AG04449 (cell line): ENCODE measurements at regions of chr5 and their contacts with region 1.

Region 1: GRCh38 chr5:58460732-58461286 is 923 bp upstream of the PLK2 start:
- DNase-seq: no peak
- H3K4me3 ChIP-seq: peak overlapping the region; percentile 88
- CTCF ChIP-seq: peak; percentile 84

Region 2: GRCh38 chr5:57442080-57442839 is 1018.5 kb before region 1 on chr5:
- CTCF ChIA-PET with region 1: interaction called, 5 read pairs
- POLR2A ChIA-PET with region 1: interaction called, 15 read pairs
- DNase-seq: peak; percentile 87
- H3K4me3 ChIP-seq: no peak overlapping the region
- CTCF ChIP-seq: no peak

Region 3: DNA sequence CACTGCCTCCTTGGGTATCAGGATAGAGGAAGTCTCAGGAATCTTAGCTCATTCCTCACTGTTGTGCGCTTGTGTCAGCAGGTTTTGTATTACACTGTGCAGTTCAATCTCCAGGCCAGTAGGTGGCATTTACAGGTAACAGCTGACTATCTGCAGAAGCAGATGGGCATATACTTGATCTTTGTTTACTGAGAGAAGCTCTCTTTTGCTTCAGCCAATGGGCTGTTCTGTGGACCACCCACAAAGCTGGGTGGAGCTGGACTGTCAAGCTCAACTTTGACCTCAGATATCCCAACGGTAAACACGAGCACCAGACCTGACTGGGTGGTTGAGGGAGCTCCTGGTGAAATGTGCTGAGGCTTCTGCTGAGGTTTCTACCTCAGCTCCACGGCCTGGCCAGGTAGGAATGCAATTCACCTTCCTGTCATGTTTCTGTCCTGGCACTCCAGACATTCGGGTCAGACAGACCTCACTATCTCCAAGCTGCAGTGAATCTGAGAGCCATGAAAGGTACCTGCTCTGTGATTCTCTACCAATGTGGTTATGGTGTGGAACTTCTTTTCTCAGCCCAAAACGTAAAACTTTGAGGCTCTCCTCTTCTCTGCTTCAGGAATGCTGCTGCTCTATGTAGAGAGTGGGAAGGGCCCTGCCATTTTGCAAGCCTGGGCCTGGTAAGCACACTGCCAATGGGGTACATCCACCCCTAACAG is 810.3 kb before region 1 on chr5:
- CTCF ChIA-PET with region 1: interaction called, 23 read pairs
- POLR2A ChIA-PET with region 1: no interaction called
- DNase-seq: no peak
- H3K4me3 ChIP-seq: no peak overlapping the region
- CTCF ChIP-seq: peak; percentile 63

Region 4: DNA sequence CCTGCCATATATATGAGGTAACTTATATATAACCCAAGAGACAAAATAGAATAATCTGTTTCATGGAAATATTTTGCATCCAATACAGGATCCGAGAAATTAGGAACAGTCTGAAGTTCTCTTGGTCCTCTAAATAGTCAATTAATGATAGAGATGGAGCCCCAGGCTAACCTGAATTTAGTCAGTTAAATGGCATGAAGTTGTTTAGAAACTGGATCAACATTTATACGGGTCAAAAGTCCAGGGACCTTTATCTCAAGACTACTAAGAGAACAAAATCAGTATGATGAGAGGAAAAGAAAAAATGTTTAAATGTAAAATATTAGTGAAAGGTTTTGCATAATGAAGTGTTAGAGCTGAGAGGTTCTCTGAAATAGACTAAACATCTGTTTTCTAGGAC is 674.9 kb before region 1 on chr5:
- CTCF ChIA-PET with region 1: interaction called, 283 read pairs
- POLR2A ChIA-PET with region 1: interaction called, 4 read pairs
- DNase-seq: no peak
- H3K4me3 ChIP-seq: no peak overlapping the region
- CTCF ChIP-seq: no peak

Region 5: DNA sequence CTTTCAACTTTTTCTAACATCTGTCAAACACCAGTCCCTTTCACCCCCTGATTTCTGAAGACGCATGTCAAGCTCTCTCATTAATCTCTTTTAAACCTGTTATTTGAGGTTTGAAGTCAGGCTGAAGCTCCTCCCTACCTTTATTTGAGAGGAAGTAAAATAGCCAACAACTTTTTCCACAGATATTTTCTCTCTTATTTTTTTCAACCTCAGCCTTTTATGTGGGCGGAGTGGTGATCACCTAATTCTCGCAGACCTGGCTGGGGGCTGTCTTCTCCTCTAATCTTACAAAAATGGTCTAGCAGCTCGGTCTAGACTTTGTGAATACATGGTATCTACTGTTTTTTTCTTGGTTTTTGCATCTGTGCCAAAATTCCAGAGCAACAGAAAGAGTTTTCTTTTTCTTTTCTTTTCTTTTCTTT is 582.5 kb before region 1 on chr5:
- CTCF ChIA-PET with region 1: interaction called, 19 read pairs
- POLR2A ChIA-PET with region 1: interaction called, 4 read pairs
- DNase-seq: no peak
- H3K4me3 ChIP-seq: no peak overlapping the region
- CTCF ChIP-seq: no peak

Region 6: GRCh38 chr5:57896596-57896995 is 564.2 kb before region 1 on chr5:
- CTCF ChIA-PET with region 1: interaction called, 25 read pairs
- POLR2A ChIA-PET with region 1: interaction called, 3 read pairs
- DNase-seq: no peak
- H3K4me3 ChIP-seq: no peak overlapping the region
- CTCF ChIP-seq: no peak

Region 7: GRCh38 chr5:58447226-58447625 is 13.6 kb before region 1 on chr5:
- CTCF ChIA-PET with region 1: interaction called, 7 read pairs
- POLR2A ChIA-PET with region 1: interaction called, 10 read pairs
- DNase-seq: no peak
- H3K4me3 ChIP-seq: no peak overlapping the region
- CTCF ChIP-seq: no peak

Region 8: DNA sequence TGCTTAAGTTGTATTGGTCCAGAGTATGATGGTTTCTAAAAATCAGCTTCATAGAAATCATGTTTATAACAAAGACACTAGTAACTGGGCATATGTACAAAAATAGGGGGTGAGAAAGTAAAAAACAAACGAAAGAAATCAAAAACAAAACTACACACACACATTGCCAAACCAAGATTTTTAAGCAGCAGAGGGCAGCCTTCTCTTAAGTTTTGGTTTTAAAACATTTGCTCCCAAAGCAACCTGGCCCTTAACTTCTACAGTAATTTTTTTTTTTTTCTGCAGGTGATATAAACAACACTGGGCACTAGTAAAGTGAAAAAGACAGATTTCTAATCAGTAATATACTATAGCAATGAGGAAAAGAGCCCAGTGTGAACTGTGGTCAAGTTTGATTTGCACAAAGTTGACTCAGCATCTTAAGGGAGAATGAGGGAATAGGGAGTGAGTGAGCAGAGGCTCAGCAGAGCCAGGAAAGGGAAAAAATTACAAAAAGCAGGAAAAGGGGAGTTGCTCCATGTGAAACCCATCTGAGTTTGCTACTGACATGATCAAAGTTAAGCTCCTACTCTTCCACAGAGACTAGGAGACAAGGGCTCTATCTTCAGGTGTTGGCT is 17.1 kb after region 1 on chr5:
- CTCF ChIA-PET with region 1: no interaction called
- POLR2A ChIA-PET with region 1: no interaction called
- DNase-seq: no peak
- H3K4me3 ChIP-seq: no peak overlapping the region
- CTCF ChIP-seq: no peak